ENCODE measurements at regions of chr10 and their contacts with region 1.

Region 1: DNA sequence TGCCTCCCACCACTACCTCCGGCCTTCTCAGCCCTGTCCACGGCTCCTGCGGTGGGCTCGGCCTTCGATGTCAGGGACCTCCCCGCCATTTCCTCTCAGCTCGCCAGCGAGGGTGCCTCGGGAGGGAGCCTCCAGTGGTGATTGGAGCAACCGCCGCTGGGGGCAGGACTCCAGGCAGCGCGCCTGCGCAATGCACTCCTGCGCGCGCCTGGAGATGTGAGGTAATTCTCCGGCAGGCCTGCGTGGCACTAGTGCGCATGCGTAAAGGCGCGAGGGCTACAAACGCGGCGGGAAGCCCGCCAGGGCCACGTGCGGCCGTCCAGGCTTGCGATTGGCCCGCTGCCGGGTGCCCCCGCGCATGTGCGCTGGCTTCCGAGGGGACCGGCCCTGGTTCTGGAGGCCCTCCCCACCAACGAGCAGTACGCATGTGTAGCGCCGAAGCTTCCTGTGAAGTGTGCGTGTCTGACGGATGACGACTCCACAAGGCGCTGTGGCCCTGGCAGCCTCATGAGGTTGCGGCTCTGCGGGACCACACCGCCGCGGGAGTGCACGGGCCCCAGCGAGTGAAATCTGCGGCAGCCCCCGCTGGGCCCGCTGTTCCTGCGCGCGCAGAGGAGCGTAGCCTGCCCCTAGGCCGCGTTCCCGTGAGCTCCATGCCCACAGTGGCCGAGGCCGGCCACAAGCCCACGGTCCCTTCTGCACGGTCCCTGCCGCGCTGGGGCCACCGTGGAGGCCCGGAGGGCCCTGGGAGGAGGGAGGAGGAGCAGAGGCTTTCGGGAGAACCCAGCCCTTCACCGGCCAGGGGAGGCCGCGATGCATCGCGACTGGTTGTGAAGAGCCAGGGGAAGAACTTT is at the start of gene SYCE1:
- DNase-seq: no peak
- ATAC-seq: no peak
- H3K4me3 ChIP-seq: no peak within 1 kb of the TSS
- H3K27ac ChIP-seq: no peak within 1 kb of the TSS
- H3K4me1 ChIP-seq: no peaks in the 10 kb centered on the region
- H3K27me3 ChIP-seq: no peaks in the 10 kb centered on the region
- CTCF ChIP-seq: no peak
- POLR2A ChIP-seq: no peak
- RAD21 ChIP-seq: no peak
- total RNA-seq, gene SYCE1: not detected in 2 replicates

Region 2: GRCh38 chr10:133045556-133046389 is 519.9 kb before region 1 on chr10:
- CTCF ChIA-PET with region 1: no interaction called
- POLR2A ChIA-PET with region 1: no interaction called
- dilution Hi-C with region 1: no loop called
- in situ Hi-C with region 1: no loop called
- intact Hi-C with region 1: no loop called
- DNase-seq: no peak
- ATAC-seq: no peak
- H3K4me3 ChIP-seq: no peak overlapping the region
- H3K27ac ChIP-seq: no peak overlapping the region
- H3K4me1 ChIP-seq: no peaks in the 10 kb centered on the region
- H3K27me3 ChIP-seq: peaks cover 11% of the 10 kb centered on the region
- CTCF ChIP-seq: no peak
- POLR2A ChIP-seq: no peak
- RAD21 ChIP-seq: no peak

Region 3: DNA sequence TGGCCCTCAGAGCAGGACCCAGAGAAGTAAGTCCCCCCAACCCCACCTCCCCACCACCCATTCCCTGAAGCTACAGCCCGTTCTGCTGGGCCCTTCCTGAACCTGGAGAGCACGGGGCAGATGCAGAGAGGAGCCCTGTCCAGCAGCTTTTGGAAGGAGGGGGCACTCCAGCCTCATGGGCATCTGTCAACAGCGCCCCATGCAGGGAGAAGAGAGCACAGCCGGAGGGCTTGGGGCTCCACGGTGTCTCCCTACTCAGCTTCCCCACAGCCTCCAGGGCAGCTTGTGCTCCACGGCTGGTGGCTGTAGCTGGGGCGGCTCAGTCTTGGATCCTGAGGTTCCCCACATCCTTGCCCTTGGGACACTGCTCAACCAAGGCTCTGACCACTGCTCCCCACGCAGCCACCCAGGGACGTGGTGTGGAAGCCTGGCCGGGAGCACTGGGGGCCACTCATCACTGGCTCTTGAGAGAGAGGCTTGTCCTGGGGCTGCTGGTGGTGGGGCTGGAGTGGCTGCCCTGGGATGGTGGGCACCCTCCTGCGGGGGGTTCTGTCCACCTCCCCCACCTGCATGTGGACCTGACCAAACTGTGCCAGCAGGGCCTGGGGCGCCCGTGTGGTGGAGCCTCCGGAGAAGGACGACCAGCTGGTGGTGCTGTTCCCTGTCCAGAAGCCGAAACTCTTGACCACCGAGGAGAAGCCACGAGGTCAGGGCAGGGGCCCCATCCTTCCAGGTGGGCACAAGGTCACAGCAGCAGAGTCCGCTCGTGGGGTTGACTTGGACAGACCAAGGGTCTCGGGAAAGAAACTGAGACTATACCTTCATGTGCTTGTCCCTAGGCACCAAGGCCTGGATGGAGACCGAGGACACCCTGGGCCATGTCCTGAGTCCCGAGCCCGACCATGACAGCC is 214.0 kb before region 1 on chr10:
- CTCF ChIA-PET with region 1: no interaction called
- POLR2A ChIA-PET with region 1: no interaction called
- dilution Hi-C with region 1: no loop called
- in situ Hi-C with region 1: no loop called
- intact Hi-C with region 1: no loop called
- DNase-seq: no peak
- ATAC-seq: no peak; the same call in none of the 2 replicates
- H3K4me3 ChIP-seq: no peak overlapping the region
- H3K27ac ChIP-seq: no peak overlapping the region
- H3K4me1 ChIP-seq: peaks cover 2% of the 10 kb centered on the region; the same call in 1 of the 2 replicates
- H3K27me3 ChIP-seq: peaks cover 3% of the 10 kb centered on the region; the same call in 1 of the 2 replicates
- CTCF ChIP-seq: peak; percentile 9; the same call in 1 of the 2 replicates
- POLR2A ChIP-seq: no peak
- RAD21 ChIP-seq: no peak

Region 4: DNA sequence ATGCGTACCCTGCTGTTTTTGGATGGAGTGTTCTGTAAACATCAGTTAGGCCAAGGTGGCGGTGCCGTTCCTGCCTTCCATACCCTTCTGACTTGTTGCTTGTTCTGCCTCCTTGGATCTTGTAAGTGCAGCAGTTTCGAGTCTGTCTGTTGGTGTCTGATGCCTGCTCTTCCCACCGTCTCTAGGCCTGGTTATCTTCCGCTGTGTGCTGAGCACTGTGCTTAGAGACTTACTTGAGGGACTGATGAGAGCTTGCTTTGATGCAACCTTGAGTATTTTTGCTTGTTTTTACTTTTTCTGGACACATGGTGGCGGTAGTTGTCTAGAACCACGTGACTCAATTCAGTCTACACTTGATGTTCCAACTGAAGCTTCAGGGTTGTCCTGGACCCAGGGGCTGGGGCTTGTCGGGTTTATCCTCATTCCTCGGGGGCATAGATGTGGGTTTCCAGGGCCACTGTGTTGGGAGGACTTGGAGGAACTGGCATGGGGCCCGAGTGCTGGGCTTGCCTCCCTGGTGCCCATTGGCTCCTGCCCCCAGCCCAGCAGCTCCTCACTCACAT is 126.9 kb before region 1 on chr10:
- CTCF ChIA-PET with region 1: no interaction called
- POLR2A ChIA-PET with region 1: no interaction called
- dilution Hi-C with region 1: no loop called
- in situ Hi-C with region 1: loop called (anchors 5 kb)
- intact Hi-C with region 1: no loop called
- DNase-seq: no peak
- ATAC-seq: 0 out of 2 replicates have a peak, but pooled peaks have one; percentile 43
- H3K4me3 ChIP-seq: no peak overlapping the region
- H3K27ac ChIP-seq: no peak overlapping the region
- H3K4me1 ChIP-seq: no peaks in the 10 kb centered on the region
- H3K27me3 ChIP-seq: no peaks in the 10 kb centered on the region
- CTCF ChIP-seq: 0 out of 2 replicates have a peak, but pooled peaks have one; percentile 30
- POLR2A ChIP-seq: no peak
- RAD21 ChIP-seq: no peak; the same call in 1 of the 2 replicates

Region 5: GRCh38 chr10:133590970-133591359 is 25.3 kb after region 1 on chr10:
- CTCF ChIA-PET with region 1: no interaction called
- POLR2A ChIA-PET with region 1: no interaction called
- dilution Hi-C with region 1: no loop called
- in situ Hi-C with region 1: no loop called
- intact Hi-C with region 1: loop called (anchors 1 kb)
- DNase-seq: no peak
- ATAC-seq: no peak
- H3K4me3 ChIP-seq: no peak overlapping the region
- H3K27ac ChIP-seq: no peak overlapping the region
- H3K4me1 ChIP-seq: no peaks in the 10 kb centered on the region
- H3K27me3 ChIP-seq: no peaks in the 10 kb centered on the region
- CTCF ChIP-seq: no peak
- POLR2A ChIP-seq: no peak
- RAD21 ChIP-seq: no peak